ENCODE measurements at regions of chr3 and their contacts with region 1.

Region 1: DNA sequence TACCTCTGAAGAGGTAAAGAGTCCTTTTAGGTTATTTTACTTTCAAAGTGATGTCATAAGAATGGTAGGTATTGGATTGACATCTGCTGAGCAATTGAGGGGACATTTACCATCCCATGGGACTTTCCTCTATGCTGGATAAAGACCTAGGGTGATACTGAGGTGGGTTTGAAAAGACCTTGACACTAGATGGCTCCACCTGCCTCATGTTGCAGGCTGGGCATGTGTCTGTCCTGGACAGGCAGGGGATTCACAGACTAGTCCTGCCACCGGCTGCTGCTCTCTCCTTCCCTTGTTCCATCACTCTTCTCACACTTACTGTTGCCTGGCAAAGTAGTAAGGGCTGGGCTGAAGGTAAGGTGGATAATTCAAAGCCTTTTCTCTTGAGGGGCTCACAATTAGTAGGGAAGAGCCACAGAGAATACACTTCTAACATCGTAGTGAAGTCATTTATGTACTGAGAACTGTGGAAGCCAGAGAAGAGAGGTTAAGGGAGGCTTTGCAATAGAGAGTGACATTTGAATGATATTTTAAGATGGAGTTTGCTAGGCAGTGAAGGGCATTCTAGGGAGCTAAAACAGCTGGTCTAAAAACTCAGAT is 27.7 kb downstream of the TRAK1 start:
- DNase-seq: no peak
- ATAC-seq: peak; percentile 93
- H3K4me3 ChIP-seq: no peak overlapping the region
- H3K27ac ChIP-seq: no peak overlapping the region
- H3K4me1 ChIP-seq: no peaks in the 10 kb centered on the region
- H3K27me3 ChIP-seq: no peaks in the 10 kb centered on the region
- CTCF ChIP-seq: peak; percentile 54

Region 2: GRCh38 chr3:42166662-42167300 is 47.9 kb after region 1 on chr3:
- CTCF ChIA-PET with region 1: no interaction called
- POLR2A ChIA-PET with region 1: no interaction called
- in situ Hi-C with region 1: no loop called
- intact Hi-C with region 1: no loop called
- DNase-seq: no peak
- ATAC-seq: no peak
- H3K4me3 ChIP-seq: no peak overlapping the region
- H3K27ac ChIP-seq: no peak overlapping the region
- H3K4me1 ChIP-seq: peaks cover 4% of the 10 kb centered on the region; the same call in 1 of the 2 replicates
- H3K27me3 ChIP-seq: no peaks in the 10 kb centered on the region
- CTCF ChIP-seq: no peak

Region 3: DNA sequence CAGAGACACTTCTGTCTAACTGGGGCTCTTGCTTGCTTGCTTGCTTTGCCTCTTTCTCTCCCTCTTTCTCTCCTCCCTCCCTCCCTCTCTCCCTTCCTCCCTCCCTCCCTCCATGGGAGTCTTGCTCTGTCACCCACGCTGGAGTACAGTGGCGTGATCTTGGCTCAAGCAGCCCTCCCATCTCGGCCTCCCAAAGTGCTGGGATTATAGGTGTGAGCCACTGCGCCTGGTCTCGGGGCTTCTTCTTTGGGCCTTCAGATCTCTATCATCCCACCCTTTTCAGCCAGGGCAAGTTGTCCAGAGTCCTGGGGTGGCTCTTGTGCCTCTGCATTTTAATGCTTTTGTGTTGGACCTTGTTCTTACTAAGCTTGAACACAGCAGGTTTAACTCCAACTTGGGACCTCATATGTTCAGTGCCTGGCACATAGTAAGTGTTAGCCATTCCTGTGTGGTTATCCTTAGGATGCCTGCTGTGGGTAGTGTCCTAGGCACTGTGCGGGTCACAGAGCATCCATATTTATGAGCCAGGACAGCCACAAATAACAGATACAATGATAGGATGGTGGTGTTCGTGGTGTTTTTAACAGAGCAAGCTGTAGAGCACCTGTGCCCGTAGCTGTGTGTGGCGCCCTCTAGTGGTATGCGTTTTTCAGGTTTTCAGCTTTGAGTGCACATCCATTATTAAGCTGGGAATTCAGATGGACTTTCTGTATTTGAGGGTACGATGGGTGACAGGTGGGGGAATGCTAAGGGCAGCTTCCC is 72.0 kb after region 1 on chr3:
- CTCF ChIA-PET with region 1: interaction called, 11 read pairs
- POLR2A ChIA-PET with region 1: no interaction called
- in situ Hi-C with region 1: no loop called
- intact Hi-C with region 1: loop called (anchors 1 kb)
- DNase-seq: peak; percentile 36
- ATAC-seq: peak; percentile 84
- H3K4me3 ChIP-seq: no peak overlapping the region
- H3K27ac ChIP-seq: no peak overlapping the region
- H3K4me1 ChIP-seq: no peaks in the 10 kb centered on the region
- H3K27me3 ChIP-seq: no peaks in the 10 kb centered on the region
- CTCF ChIP-seq: peak; percentile 89